Upper lobe of right lung (tissue), 1 donor: ENCODE measurements at regions of chr1 and their contacts with region 1.

Region 1: GRCh38 chr1:226062558-226063223 is at the start of gene H3-3A:
- DNase-seq: peak; percentile 99
- ATAC-seq: peak; percentile 95
- H3K4me3 ChIP-seq: peak within 1 kb of the TSS; percentile 77
- H3K27ac ChIP-seq: peak within 1 kb of the TSS; percentile 99
- H3K4me1 ChIP-seq: peaks cover 38% of the 10 kb centered on the region
- H3K27me3 ChIP-seq: no peaks in the 10 kb centered on the region
- CTCF ChIP-seq: peak; percentile 8
- total RNA-seq, gene H3-3A: 435 TPM

Region 2: DNA sequence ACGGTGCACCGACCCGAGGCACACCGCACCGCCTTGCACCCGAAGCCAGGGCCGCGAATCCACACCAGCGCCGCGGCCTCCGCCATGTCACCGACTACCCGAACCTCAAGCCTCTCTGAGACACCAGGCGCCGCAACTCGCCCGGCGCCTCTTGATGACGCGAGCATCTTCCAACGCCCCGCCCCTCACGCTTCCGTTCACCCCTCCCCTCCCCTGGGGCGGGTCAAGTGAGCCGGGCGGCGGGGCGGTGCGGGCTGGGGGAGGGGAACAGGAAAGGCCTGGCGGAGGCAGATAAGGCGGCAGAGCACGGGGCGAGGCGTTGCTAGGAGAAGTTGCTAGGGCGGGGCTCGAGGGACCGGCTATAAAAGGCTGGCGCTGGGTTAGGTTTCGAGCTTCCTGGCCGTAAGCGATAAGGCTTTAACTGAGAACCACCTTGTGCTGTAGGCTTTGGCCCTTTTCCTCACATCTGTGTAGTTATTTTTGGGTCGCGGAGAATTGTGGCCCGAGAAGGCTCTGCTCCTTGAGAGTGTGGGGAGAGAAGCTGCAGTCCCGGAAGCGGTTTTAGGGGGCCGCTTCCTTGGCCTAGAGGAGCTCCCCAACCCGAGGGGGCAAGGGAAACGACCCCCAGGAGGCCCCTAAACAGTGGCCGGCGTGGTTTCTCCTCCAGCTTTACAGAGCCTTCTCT is 63.3 kb before region 1 on chr1 and contains the start of gene SDE2:
- intact Hi-C with region 1: loop called (anchors 10 kb)
- DNase-seq: peak; percentile 100
- ATAC-seq: peak; percentile 98
- H3K4me3 ChIP-seq: peak within 1 kb of the TSS; percentile 83
- H3K27ac ChIP-seq: peak within 1 kb of the TSS; percentile 100
- H3K4me1 ChIP-seq: peaks cover 64% of the 10 kb centered on the region
- H3K27me3 ChIP-seq: no peaks in the 10 kb centered on the region
- CTCF ChIP-seq: no peak
- total RNA-seq, gene SDE2: 21.8 TPM

Region 3: DNA sequence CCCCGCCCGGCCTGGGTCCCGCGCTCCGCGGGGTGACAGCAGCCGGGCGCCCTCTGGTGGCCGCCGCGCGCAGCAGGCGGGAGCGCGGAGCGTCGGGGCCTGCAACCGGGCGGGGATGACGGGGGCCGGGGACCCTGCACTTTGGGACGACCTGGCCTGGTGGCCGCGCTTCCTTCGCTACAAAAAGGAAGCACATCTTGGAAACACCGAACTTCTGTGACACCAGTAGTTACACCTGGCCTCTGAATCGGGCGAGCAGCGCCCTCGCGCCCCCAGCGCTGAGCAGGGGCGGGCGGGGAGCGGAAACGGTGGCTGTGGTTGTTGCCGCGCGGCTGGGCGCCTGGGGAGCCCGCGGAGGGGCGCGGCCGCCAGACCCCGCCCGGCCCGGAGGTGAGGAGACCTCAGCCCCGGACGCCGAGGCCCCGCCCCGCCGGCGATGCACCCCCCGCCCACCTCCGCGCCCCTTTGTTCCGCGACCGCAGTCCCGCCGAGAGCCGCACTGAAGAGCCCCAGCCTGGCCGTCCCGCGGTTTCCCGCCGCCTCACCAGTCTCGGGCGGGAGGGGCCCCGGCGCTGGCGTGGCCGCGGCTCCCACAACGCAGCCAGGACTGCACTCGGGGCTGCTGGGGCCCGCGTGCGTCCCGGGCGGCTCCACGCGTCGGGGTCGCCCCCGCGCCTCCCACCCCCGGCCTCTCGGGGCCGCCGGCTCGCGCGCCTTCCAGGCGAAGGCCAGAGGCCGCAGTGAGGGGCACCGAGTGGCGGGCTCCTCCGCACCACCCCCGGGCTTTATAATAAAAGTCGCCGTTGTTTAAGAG is 59.1 kb after region 1 on chr1:
- intact Hi-C with region 1: loop called (anchors 5 kb)
- DNase-seq: peak; percentile 88
- ATAC-seq: peak; percentile 89
- H3K4me3 ChIP-seq: peak overlapping the region; percentile 69
- H3K27ac ChIP-seq: peak overlapping the region; percentile 82
- H3K4me1 ChIP-seq: peaks cover 6% of the 10 kb centered on the region
- H3K27me3 ChIP-seq: no peaks in the 10 kb centered on the region
- CTCF ChIP-seq: peak; percentile 71